Endothelial cell of umbilical vein (primary cell): ENCODE measurements at regions of chr18 and their contacts with region 1.

Region 1: GRCh38 chr18:76982841-76983587 is 149.6 kb downstream of the MBP start:
- DNase-seq: peak; percentile 80
- H3K4me3 ChIP-seq: no peak overlapping the region
- H3K27ac ChIP-seq: no peak overlapping the region
- H3K4me1 ChIP-seq: no peaks in the 10 kb centered on the region
- H3K27me3 ChIP-seq: peaks cover 0 to 7% of the 10 kb centered on the region in 2 experiments
- CTCF ChIP-seq: peak; percentile 89 to 91
- POLR2A ChIP-seq: no peak

Region 2: DNA sequence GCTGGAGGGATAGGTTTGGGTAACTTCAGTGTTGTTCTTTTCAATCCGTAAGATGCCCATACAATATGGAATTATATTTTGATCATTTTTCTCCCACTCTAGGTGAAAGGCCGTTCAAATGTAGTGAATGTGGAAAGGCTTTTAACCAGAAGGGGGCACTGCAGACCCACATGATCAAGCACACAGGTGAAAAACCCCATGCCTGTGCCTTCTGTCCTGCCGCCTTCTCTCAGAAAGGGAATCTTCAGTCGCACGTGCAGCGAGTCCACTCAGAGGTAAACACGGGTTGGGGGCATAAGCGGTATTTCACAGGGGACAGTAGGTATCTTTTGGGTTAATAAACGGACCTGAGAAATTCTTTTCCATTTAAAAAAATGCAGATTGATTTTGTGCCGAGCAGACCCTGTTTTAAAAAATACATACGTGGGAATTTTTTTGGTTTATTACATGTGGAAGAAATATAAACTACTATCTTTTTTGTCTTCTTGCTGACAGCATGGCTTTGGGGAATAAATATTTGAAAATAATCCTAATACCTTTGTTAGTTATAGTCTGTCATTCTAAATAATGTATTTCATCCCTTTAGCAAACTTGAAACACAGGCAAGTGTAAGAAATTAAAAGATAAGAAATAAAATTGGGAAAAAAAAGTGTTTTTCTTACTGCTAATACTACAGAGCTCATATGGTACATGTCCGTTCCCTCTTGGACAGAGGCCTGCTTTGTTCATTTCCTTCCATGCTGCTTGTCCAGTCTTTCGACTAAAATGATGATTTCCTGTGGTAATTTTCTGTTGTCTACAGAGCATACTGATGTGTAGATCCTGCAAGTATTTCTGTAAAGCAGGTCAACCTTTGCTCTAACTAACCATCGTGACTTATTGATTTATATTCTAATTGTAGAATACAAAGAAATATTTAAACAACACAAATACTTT is 107.4 kb before region 1 on chr18:
- CTCF ChIA-PET with region 1: interaction called, 5 read pairs
- POLR2A ChIA-PET with region 1: no interaction called
- dilution Hi-C with region 1: no loop called
- intact Hi-C with region 1: loop called (anchors 1 kb)
- DNase-seq: peak; percentile 52
- H3K4me3 ChIP-seq: no peak overlapping the region
- H3K27ac ChIP-seq: no peak overlapping the region
- H3K4me1 ChIP-seq: no peaks in the 10 kb centered on the region
- H3K27me3 ChIP-seq: no peaks in the 10 kb centered on the region
- CTCF ChIP-seq: peak; percentile 63
- POLR2A ChIP-seq: no peak

Region 3: DNA sequence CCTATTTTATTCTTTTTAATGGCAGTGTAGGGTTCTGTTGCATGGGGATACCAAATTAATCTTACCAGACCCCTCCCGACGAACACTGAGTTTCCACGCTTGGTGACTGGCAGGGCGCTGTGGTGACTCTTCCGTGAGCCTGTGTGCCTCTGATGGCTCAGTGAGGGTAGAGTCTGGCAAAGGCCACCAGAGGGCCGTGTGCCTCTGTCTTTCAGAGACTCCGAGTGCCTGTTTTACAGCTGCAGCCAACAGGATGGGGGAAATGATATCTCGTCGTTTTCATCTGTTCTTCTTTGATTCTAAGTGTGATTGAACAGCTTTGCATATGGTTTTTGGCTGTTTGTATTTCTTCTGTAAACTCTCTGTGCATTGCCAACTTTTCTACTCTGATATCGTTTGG is 60.9 kb before region 1 on chr18:
- CTCF ChIA-PET with region 1: interaction called, 74 read pairs
- POLR2A ChIA-PET with region 1: no interaction called
- dilution Hi-C with region 1: no loop called
- intact Hi-C with region 1: loop called (anchors 1 kb)
- DNase-seq: peak; percentile 66
- H3K4me3 ChIP-seq: no peak overlapping the region
- H3K27ac ChIP-seq: no peak overlapping the region
- H3K4me1 ChIP-seq: no peaks in the 10 kb centered on the region
- H3K27me3 ChIP-seq: no peaks in the 10 kb centered on the region
- CTCF ChIP-seq: peak; percentile 47 to 76
- POLR2A ChIP-seq: no peak

Region 4: GRCh38 chr18:76970770-76971559 is 12.0 kb before region 1 on chr18:
- CTCF ChIA-PET with region 1: interaction called, 29 read pairs
- POLR2A ChIA-PET with region 1: no interaction called
- dilution Hi-C with region 1: no loop called
- intact Hi-C with region 1: no loop called
- DNase-seq: no peak
- H3K4me3 ChIP-seq: no peak overlapping the region
- H3K27ac ChIP-seq: no peak overlapping the region
- H3K4me1 ChIP-seq: no peaks in the 10 kb centered on the region
- H3K27me3 ChIP-seq: no peaks in the 10 kb centered on the region
- CTCF ChIP-seq: no peak
- POLR2A ChIP-seq: no peak

Region 5: GRCh38 chr18:77000527-77000926 is 17.5 kb after region 1 on chr18:
- CTCF ChIA-PET with region 1: interaction called, 14 read pairs
- POLR2A ChIA-PET with region 1: no interaction called
- dilution Hi-C with region 1: no loop called
- intact Hi-C with region 1: no loop called
- DNase-seq: peak; percentile 46
- H3K4me3 ChIP-seq: no peak overlapping the region
- H3K27ac ChIP-seq: no peak overlapping the region
- H3K4me1 ChIP-seq: no peaks in the 10 kb centered on the region
- H3K27me3 ChIP-seq: peaks cover 1 to 8% of the 10 kb centered on the region in 2 experiments
- CTCF ChIP-seq: peak; percentile 90 to 94
- POLR2A ChIP-seq: no peak

Region 6: DNA sequence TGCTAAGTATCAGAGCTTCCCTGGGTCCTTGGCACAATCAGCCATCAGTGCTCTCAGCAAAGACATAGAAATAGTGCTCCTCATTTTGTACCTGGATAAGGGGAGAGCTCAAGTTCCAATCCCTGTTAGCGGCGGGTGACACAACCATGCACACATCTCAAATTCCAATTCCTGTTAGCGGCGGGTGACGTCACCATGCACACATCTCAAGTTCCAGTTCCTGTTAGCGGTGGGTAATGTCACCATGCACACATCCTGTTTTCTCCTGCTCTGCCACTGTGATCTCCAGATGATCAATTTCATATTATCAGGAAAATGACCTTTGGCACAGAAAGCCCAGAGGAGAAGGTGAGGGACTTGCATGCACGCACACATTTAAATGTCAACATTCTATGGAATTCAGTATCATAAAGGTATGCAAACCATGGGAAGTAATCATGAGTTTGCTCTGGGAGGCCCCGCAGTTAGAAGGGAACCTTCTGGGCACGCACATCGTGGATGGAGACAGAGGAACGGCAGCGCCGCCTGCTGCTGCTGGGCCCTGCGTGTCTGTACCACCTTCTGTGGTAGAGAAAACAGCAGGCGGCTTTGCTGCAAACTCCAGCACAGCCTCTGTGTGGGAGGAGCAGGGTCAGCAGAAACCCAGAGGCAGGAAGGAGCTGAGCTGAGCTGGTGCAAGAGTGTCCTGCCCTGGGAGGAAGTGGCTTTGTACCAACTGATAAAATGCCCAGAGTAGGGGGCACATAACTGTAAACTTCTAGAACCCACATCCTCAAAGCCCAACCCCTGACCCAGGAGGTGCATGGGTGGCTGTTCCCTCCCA is 71.8 kb after region 1 on chr18:
- CTCF ChIA-PET with region 1: interaction called, 5 read pairs
- POLR2A ChIA-PET with region 1: no interaction called
- dilution Hi-C with region 1: no loop called
- intact Hi-C with region 1: loop called (anchors 5 kb)
- DNase-seq: peak; percentile 88
- H3K4me3 ChIP-seq: peak overlapping the region in 1 of 3 experiments; percentile 17
- H3K27ac ChIP-seq: peak overlapping the region; percentile 37
- H3K4me1 ChIP-seq: peaks cover 22% of the 10 kb centered on the region
- H3K27me3 ChIP-seq: no peaks in the 10 kb centered on the region
- CTCF ChIP-seq: peak; percentile 64 to 84
- POLR2A ChIP-seq: no peak